ENCODE measurements at regions of chr9 and their contacts with region 1.

Region 1: GRCh38 chr9:93108291-93109041 is 12.4 kb downstream of the CARD19 start:
- DNase-seq: no peak
- H3K4me3 ChIP-seq: no peak overlapping the region
- H3K27ac ChIP-seq: no peak overlapping the region
- H3K4me1 ChIP-seq: peaks cover 18% of the 10 kb centered on the region
- H3K27me3 ChIP-seq: no peaks in the 10 kb centered on the region
- CTCF ChIP-seq: no peak

Region 2: DNA sequence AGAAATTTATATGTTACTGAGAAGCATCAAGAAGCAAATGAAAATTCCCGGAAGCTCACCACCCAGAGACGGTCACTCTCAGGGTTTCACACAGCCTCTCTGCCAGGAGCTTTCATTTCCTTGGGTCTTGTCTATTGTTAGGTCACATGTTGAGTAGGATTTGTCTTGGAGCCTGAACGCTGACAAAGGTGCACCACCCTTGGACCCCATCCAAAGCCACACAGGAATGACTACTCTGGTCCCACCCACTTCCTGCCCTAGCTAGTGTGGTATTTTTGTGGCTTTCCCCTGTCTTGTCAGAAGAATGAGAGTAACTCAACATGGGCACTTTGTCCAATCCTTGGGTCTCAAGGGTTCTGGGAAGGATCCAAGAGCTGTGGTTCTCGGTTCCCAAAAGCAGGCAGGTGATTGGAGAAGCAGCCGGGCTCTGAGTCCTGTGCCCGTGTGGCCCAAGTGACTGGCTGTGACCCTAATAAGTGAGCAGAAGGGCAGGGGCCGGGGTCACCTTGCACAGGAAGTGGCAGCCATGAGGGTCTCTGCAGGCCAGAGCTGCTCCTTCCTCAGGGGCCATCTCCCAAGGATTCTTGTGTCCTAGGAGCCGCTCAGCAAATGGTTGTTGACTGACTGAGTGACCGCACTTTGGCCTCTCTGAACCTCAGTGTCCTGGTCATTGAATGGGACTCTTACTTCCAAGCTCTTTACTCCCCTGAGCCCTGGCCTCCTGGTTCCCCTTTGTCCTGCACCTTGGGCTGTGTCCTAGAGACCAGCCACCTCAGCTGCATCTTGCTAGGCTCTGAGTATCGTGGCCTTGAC is 154.2 kb before region 1 on chr9:
- CTCF ChIA-PET with region 1: no interaction called
- dilution Hi-C with region 1: no loop called
- in situ Hi-C with region 1: no loop called
- intact Hi-C with region 1: loop called (anchors 1 kb)
- DNase-seq: peak; percentile 89
- H3K4me3 ChIP-seq: no peak overlapping the region
- H3K27ac ChIP-seq: peak overlapping the region; percentile 38
- H3K4me1 ChIP-seq: peaks cover 20% of the 10 kb centered on the region
- H3K27me3 ChIP-seq: no peaks in the 10 kb centered on the region
- CTCF ChIP-seq: no peak

Region 3: DNA sequence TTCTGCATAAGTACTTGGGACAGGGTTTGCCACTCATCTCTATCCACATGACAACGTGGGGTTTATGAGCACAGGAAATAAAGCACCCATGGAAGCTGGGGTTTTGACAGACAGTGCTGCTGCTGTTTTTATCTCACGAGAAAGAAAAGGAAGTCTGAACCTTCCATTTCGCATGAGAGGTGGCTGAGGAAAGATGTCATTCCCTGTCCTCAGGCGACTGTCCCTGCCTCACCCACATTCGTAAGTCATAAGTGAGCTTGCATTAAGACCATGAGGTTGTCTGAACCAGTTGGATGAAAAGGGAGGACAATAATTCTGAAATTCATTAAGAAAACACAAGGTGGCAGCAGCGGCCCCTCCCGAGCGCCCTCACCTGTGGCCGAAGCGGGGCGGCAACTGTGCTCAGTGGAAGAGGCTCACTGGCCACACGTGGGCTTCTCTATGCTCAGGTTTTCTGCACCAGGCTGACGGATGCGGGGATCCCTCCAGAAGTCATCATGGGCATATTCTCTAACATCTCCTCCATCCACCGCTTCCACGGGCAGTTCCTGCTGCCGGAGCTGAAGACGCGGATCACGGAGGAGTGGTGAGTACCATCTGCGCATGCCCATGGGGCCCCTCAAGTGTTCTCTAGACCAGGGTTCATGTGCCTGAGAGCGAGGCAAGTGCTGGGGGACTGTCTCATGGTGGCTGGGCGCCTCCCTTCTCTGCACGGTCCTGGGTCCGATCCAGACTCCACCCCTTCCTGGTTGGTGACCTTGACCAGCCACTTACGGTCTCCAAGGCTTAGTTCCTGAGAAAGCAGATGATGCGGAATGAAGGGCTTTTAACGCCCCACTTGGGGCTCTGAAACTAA is 104.7 kb before region 1 on chr9:
- CTCF ChIA-PET with region 1: interaction called, 4 read pairs
- dilution Hi-C with region 1: no loop called
- in situ Hi-C with region 1: no loop called
- intact Hi-C with region 1: loop called (anchors 1 kb)
- DNase-seq: peak; percentile 42
- H3K4me3 ChIP-seq: no peak overlapping the region
- H3K27ac ChIP-seq: no peak overlapping the region
- H3K4me1 ChIP-seq: no peaks in the 10 kb centered on the region
- H3K27me3 ChIP-seq: no peaks in the 10 kb centered on the region
- CTCF ChIP-seq: peak; percentile 52 to 78

Region 4: GRCh38 chr9:93154315-93154903 is 45.9 kb after region 1 on chr9:
- CTCF ChIA-PET with region 1: interaction called, 3 read pairs
- dilution Hi-C with region 1: no loop called
- in situ Hi-C with region 1: no loop called
- intact Hi-C with region 1: loop called (anchors 2 kb)
- DNase-seq: no peak
- H3K4me3 ChIP-seq: no peak overlapping the region
- H3K27ac ChIP-seq: no peak overlapping the region
- H3K4me1 ChIP-seq: no peaks in the 10 kb centered on the region
- H3K27me3 ChIP-seq: no peaks in the 10 kb centered on the region
- CTCF ChIP-seq: peak; percentile 74 to 77